ENCODE measurements at regions of chr1 and their contacts with region 1.

Region 1: GRCh38 chr1:26541816-26542711 is 12.5 kb downstream of the RPS6KA1 start:
- DNase-seq: peak; percentile 83
- H3K4me3 Mint-ChIP-seq: peak overlapping the region; percentile 76
- H3K27ac Mint-ChIP-seq: peak overlapping the region; percentile 95
- H3K4me1 Mint-ChIP-seq: peaks cover 93% of the 10 kb centered on the region
- H3K27me3 Mint-ChIP-seq: no peaks in the 10 kb centered on the region

Region 2: DNA sequence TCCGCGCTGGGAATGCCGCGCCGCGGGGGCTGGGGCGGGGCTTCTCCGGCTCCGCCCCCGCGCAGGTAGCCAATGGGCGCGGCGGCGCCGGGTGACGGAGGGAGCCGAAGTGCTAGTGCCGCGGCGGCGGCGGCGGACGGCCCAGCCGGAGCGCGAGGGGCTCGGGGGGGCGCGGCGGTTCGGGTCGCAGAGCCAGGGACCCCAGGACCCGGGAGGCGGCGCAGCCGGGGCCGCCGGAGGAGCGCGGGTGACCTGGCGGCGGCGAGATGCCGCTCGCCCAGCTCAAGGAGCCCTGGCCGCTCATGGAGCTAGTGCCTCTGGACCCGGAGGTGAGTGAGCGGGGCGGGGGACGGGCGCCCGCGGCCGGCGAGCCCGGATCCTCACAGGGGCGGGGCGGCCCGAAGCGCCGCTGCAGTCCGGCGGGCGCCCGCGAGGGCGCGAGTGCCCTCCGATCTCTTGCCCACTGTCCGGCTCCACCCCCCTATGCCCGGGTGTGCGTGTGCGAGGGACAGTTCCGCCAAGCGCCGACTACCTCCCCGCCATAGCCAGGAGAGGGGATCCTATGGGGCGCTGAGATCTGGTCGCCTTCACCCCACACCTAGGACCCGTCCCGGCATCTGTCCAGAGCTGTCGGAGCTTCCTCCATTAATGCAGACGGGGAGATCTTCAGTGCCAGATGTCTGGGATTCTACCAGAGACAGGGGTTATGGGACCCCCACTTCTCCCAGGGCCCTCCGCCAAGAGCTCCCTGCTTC is 12.2 kb before region 1 on chr1 and contains the start of gene RPS6KA1:
- CTCF ChIA-PET with region 1: interaction called, 121 read pairs
- POLR2A ChIA-PET with region 1: interaction called, 3 read pairs
- DNase-seq: peak; percentile 62
- H3K4me3 Mint-ChIP-seq: peak within 1 kb of the TSS; percentile 86
- H3K27ac Mint-ChIP-seq: peak within 1 kb of the TSS; percentile 86
- H3K4me1 Mint-ChIP-seq: peaks cover 31% of the 10 kb centered on the region
- H3K27me3 Mint-ChIP-seq: peaks cover 8% of the 10 kb centered on the region
- total RNA-seq, gene RPS6KA1: 192 to 199 TPM

Region 3: GRCh38 chr1:26733982-26734381 is 191.9 kb after region 1 on chr1:
- CTCF ChIA-PET with region 1: no interaction called
- POLR2A ChIA-PET with region 1: no interaction called
- DNase-seq: peak; percentile 43
- H3K4me3 Mint-ChIP-seq: no peak overlapping the region
- H3K27ac Mint-ChIP-seq: peak overlapping the region; percentile 56
- H3K4me1 Mint-ChIP-seq: peaks cover 65% of the 10 kb centered on the region
- H3K27me3 Mint-ChIP-seq: no peaks in the 10 kb centered on the region

Measured in activated CD4-positive, alpha-beta T cell treated with anti-CD3 and anti-CD28 coated beads, Interleukin-2, amount 10 ng/mL, durations not matched to agents 7 days and 5 days (primary cell).